PC-3 (cell line): ENCODE measurements at regions of chr3 and their contacts with region 1.

Region 1: GRCh38 chr3:82087958-82088357 is 326.5 kb upstream of the GBE1 start:
- DNase-seq: peak; percentile 88
- ATAC-seq: peak; percentile 61
- H3K4me3 ChIP-seq: no peak overlapping the region
- H3K27ac ChIP-seq: peak overlapping the region; percentile 58
- H3K4me1 ChIP-seq: peaks cover 49% of the 10 kb centered on the region
- H3K27me3 ChIP-seq: no peaks in the 10 kb centered on the region
- CTCF ChIP-seq: no peak

Region 2: GRCh38 chr3:81838457-81838856 is 249.5 kb before region 1 on chr3:
- CTCF ChIA-PET with region 1: no interaction called
- POLR2A ChIA-PET with region 1: no interaction called
- intact Hi-C with region 1: no loop called
- DNase-seq: no peak
- ATAC-seq: no peak
- H3K4me3 ChIP-seq: no peak overlapping the region
- H3K27ac ChIP-seq: no peak overlapping the region
- H3K4me1 ChIP-seq: peaks cover 16% of the 10 kb centered on the region
- H3K27me3 ChIP-seq: no peaks in the 10 kb centered on the region
- CTCF ChIP-seq: no peak

Region 3: DNA sequence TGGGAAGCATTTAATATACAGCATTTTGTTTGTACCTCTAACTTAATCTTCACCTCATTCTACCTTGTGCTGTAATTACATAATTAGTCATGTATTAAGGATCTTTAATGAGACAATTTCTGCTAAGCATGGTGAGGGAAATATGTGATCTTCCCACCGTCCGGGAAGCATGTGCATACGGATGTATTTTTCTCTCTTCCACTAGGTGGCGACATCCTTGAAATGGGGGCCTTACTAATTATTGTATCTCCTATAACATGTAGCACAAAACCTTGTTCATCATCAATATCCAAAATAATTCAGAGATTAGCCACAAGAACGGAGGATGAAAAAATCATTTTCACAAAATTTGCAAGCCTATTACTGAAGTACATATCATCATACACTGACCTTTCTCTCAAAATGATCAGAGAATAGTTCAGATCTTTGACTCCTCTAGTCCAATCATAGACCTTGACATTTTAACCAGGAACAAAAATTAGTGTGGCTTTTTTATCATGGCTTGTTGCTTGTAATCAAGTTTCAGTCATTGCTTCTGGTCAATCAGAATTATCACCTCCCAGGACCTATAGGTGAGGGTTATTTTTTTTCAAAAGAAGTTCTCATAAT is 177.6 kb before region 1 on chr3:
- CTCF ChIA-PET with region 1: no interaction called
- POLR2A ChIA-PET with region 1: no interaction called
- intact Hi-C with region 1: loop called (anchors 5 kb)
- DNase-seq: peak; percentile 69
- ATAC-seq: peak; percentile 74
- H3K4me3 ChIP-seq: no peak overlapping the region
- H3K27ac ChIP-seq: no peak overlapping the region
- H3K4me1 ChIP-seq: peaks cover 7% of the 10 kb centered on the region; the same call in 1 of the 2 replicates
- H3K27me3 ChIP-seq: no peaks in the 10 kb centered on the region
- CTCF ChIP-seq: peak; percentile 89

Region 4: DNA sequence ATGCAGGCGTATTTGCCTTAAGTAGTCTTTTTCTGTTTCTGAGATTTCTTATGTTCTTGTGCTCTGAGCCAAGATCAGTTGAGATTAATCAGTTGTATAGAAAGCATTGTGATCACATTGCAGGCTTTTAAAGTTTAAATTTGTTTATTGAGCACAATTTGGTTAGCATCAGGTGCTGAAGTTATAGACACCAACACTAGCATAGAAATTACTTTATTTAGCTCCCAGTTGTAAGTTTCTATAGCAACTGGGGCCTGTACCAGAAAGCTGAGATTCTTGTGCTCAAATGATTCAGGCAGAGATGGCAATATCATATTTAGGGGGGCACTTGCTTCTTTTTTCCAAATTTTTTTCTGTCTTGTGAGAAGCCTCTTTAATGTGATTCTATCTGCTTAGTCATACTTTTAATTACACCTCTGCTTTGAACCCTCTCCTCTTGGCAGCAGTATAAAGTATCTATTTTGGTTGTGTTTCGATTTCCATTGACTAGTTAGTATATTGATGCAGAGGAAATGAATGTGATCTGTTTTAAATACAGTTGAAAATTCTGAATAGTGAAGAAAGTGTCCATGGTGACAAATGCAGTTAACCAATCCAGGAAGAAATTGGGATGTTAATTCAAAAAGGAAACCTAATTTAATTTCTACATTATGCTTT is 84.8 kb before region 1 on chr3:
- CTCF ChIA-PET with region 1: no interaction called
- POLR2A ChIA-PET with region 1: no interaction called
- intact Hi-C with region 1: loop called (anchors 1 kb)
- DNase-seq: no peak
- ATAC-seq: no peak
- H3K4me3 ChIP-seq: no peak overlapping the region
- H3K27ac ChIP-seq: no peak overlapping the region
- H3K4me1 ChIP-seq: 0 out of 2 replicates have a peak, but pooled peaks cover 4% of the 10 kb centered on the region
- H3K27me3 ChIP-seq: no peaks in the 10 kb centered on the region
- CTCF ChIP-seq: no peak

Region 5: DNA sequence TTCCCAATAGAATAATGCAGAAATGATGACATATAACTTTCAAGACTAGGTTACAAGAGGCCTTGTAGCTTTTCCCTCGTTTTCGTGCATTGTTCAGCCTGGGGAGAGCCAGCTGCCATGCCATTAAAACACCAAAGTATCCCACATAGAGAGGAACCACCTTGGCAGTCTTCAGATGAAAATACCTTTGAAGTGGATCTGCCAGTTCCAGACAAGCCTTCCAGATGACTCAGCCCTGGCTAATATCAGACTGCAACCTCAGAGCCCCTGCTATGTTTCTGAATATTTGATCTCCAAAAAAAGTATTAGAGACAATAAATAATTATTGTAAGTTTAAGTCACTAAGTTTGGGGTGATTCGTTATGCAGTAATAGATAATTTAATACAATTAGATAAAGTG is 32.2 kb before region 1 on chr3:
- CTCF ChIA-PET with region 1: no interaction called
- POLR2A ChIA-PET with region 1: no interaction called
- intact Hi-C with region 1: loop called (anchors 5 kb)
- DNase-seq: peak; percentile 84
- ATAC-seq: peak; percentile 95
- H3K4me3 ChIP-seq: no peak overlapping the region
- H3K27ac ChIP-seq: peak overlapping the region; percentile 20; the same call in 1 of the 2 replicates
- H3K4me1 ChIP-seq: peaks cover 29% of the 10 kb centered on the region
- H3K27me3 ChIP-seq: no peaks in the 10 kb centered on the region
- CTCF ChIP-seq: no peak

Region 6: DNA sequence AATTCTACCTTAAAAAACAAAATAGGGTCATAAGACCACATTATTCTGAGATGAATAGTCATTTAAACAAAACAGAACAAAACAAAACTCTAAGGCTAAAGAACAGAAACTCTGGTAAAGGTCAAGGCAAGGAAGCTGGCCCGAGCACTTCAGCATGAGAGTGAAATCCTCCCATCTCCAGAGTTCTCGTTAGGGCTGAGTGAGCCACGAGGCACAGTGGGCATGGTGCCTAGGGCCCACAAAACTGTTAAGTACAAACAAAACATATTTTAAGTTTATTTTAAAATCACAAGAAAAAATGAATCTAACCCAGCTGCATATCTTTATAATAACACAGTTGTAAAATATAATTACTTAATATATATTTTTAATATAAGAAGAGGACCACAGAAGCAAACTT is 91.3 kb after region 1 on chr3:
- CTCF ChIA-PET with region 1: no interaction called
- POLR2A ChIA-PET with region 1: no interaction called
- intact Hi-C with region 1: no loop called
- DNase-seq: no peak
- ATAC-seq: no peak
- H3K4me3 ChIP-seq: no peak overlapping the region
- H3K27ac ChIP-seq: no peak overlapping the region
- H3K4me1 ChIP-seq: no peaks in the 10 kb centered on the region
- H3K27me3 ChIP-seq: no peaks in the 10 kb centered on the region
- CTCF ChIP-seq: no peak

Region 7: GRCh38 chr3:82229397-82229796 is 141.4 kb after region 1 on chr3:
- CTCF ChIA-PET with region 1: no interaction called
- POLR2A ChIA-PET with region 1: no interaction called
- intact Hi-C with region 1: no loop called
- DNase-seq: no peak
- ATAC-seq: no peak
- H3K4me3 ChIP-seq: no peak overlapping the region
- H3K27ac ChIP-seq: no peak overlapping the region
- H3K4me1 ChIP-seq: no peaks in the 10 kb centered on the region
- H3K27me3 ChIP-seq: no peaks in the 10 kb centered on the region
- CTCF ChIP-seq: no peak

Region 8: GRCh38 chr3:82474711-82475110 is 386.8 kb after region 1 on chr3:
- CTCF ChIA-PET with region 1: no interaction called
- POLR2A ChIA-PET with region 1: no interaction called
- intact Hi-C with region 1: loop called (anchors 10 kb)
- DNase-seq: peak; percentile 94
- ATAC-seq: peak; percentile 95
- H3K4me3 ChIP-seq: peak overlapping the region; percentile 45; the same call in 1 of the 2 replicates
- H3K27ac ChIP-seq: peak overlapping the region; percentile 96
- H3K4me1 ChIP-seq: peaks cover 22% of the 10 kb centered on the region
- H3K27me3 ChIP-seq: no peaks in the 10 kb centered on the region
- CTCF ChIP-seq: no peak